Endothelial cell of umbilical vein (primary cell): ENCODE measurements at regions of chr13 and their contacts with region 1.

Region 1: GRCh38 chr13:26529441-26529840 is 28.0 kb upstream of the WASF3 start:
- DNase-seq: peak; percentile 71
- H3K4me3 ChIP-seq: no peak overlapping the region
- H3K27ac ChIP-seq: no peak overlapping the region
- H3K4me1 ChIP-seq: no peaks in the 10 kb centered on the region
- H3K27me3 ChIP-seq: no peaks in the 10 kb centered on the region
- CTCF ChIP-seq: no peak
- POLR2A ChIP-seq: no peak

Region 2: GRCh38 chr13:26377038-26377437 is 152.4 kb before region 1 on chr13:
- CTCF ChIA-PET with region 1: no interaction called
- POLR2A ChIA-PET with region 1: no interaction called
- dilution Hi-C with region 1: no loop called
- intact Hi-C with region 1: no loop called
- DNase-seq: peak; percentile 20
- H3K4me3 ChIP-seq: no peak overlapping the region
- H3K27ac ChIP-seq: no peak overlapping the region
- H3K4me1 ChIP-seq: no peaks in the 10 kb centered on the region
- H3K27me3 ChIP-seq: no peaks in the 10 kb centered on the region
- CTCF ChIP-seq: peak; percentile 13 to 45
- POLR2A ChIP-seq: no peak

Region 3: GRCh38 chr13:26482451-26483197 is 46.8 kb before region 1 on chr13:
- CTCF ChIA-PET with region 1: no interaction called
- POLR2A ChIA-PET with region 1: no interaction called
- dilution Hi-C with region 1: no loop called
- intact Hi-C with region 1: loop called (anchors 5 kb)
- DNase-seq: peak; percentile 79
- H3K4me3 ChIP-seq: peak overlapping the region in 1 of 3 experiments; percentile 40
- H3K27ac ChIP-seq: no peak overlapping the region
- H3K4me1 ChIP-seq: peaks cover 2% of the 10 kb centered on the region
- H3K27me3 ChIP-seq: no peaks in the 10 kb centered on the region
- CTCF ChIP-seq: peak; percentile 80 to 85
- POLR2A ChIP-seq: no peak

Region 4: DNA sequence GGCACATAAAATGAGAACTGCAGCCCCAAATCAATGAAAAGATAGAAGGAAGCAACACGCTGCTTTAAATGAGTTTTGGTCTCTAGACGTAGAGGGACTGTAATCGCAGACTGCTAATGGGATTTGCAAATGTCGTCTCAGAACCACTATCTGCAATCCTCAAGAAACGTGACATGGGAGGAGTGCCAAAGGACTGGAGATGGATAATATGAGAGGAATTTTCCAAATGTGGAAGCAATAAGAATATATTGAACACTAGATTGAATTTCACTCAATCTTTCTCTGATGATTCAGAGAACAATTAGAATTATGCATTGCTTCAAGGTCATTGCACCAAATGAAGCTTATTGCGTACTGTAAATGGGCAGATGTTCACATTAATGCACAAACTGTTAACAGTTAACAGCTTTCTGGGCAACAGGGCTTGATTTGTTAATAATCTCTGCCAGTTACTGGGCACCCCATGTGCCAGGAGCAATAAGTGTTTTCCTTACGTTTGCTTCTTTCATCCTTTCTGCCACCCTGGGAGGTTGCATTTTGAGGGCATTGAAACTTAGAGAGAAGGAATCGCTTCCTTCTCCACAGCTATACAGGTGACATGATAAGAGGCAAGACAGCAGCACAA is 34.8 kb before region 1 on chr13:
- CTCF ChIA-PET with region 1: interaction called, 16 read pairs
- POLR2A ChIA-PET with region 1: no interaction called
- dilution Hi-C with region 1: no loop called
- intact Hi-C with region 1: no loop called
- DNase-seq: no peak
- H3K4me3 ChIP-seq: no peak overlapping the region
- H3K27ac ChIP-seq: no peak overlapping the region
- H3K4me1 ChIP-seq: peaks cover 7% of the 10 kb centered on the region
- H3K27me3 ChIP-seq: peaks cover 5 to 7% of the 10 kb centered on the region in 2 experiments
- CTCF ChIP-seq: no peak
- POLR2A ChIP-seq: no peak